ENCODE measurements at regions of chr19 and their contacts with region 1.

Region 1: GRCh38 chr19:18379803-18380747 is 5.9 kb upstream of the GDF15 start:
- DNase-seq: no peak
- ATAC-seq: no peak
- H3K4me3 ChIP-seq: no peak overlapping the region
- H3K4me3 Mint-ChIP-seq: no peak overlapping the region
- H3K27ac ChIP-seq: no peak overlapping the region
- H3K27ac Mint-ChIP-seq: no peak overlapping the region
- H3K4me1 ChIP-seq: peaks cover under 1% of the 10 kb centered on the region
- H3K4me1 Mint-ChIP-seq: peaks cover 4 to 5% of the 10 kb centered on the region in 2 donors
- H3K27me3 ChIP-seq: no peaks in the 10 kb centered on the region
- H3K27me3 Mint-ChIP-seq: no peaks in the 10 kb centered on the region
- CTCF ChIP-seq: no peak

Region 2: DNA sequence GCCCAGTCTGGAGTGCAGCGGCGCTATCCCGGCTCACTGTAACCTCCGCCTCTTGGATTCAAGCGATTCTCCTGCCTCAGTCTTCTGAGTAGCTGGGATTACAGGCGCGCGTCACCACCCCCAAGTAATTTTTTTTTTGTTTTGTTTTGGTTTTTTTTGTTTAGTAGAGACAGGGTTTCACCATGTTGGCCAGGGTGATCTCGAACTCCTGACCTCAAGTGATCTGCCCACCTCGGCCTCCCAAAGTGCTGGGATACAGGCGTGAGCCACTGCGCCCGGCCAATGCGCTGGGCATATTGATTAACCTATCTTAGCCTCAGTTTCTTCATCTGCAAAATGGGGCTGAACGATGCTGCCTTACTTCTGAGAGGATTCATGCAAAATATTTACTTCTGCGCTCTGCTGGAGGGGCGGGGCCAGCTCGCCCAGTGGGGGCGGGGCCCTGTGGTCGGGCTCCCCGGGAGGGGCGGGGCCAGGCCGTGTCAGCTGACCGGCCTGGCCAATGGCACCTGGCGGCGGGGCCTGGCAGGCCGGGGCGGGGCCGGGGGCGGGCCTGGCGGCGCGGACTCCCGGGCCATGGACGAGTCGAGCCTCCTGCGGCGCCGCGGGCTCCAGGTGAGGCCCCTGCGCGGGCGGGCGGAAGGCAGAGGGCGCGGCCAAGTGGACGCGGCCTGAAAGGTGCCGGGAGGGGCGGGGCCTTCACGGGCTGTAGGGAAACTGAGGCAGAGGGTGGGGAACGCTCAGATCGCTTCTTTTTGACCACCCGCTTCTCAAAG is 282.7 kb before region 1 on chr19 and contains the start of gene MAST3:
- intact Hi-C with region 1: no loop called
- DNase-seq: peak; percentile 92 to 95
- ATAC-seq: peak; percentile 97 to 100 (median 98)
- H3K4me3 ChIP-seq: peak within 1 kb of the TSS; percentile 37
- H3K4me3 Mint-ChIP-seq: peak within 1 kb of the TSS; percentile 85
- H3K27ac ChIP-seq: peak within 1 kb of the TSS; percentile 65
- H3K27ac Mint-ChIP-seq: peak within 1 kb of the TSS; percentile 16 to 87
- H3K4me1 ChIP-seq: peaks cover 31% of the 10 kb centered on the region
- H3K4me1 Mint-ChIP-seq: peaks cover 18 to 24% of the 10 kb centered on the region in 2 donors
- H3K27me3 ChIP-seq: no peaks in the 10 kb centered on the region
- H3K27me3 Mint-ChIP-seq: no peaks in the 10 kb centered on the region
- CTCF ChIP-seq: no peak
- total RNA-seq, gene MAST3: 84.5 to 101 (median 101) TPM

Region 3: GRCh38 chr19:18419195-18419698 is 39.2 kb after region 1 on chr19 and contains the start of gene SSBP4:
- intact Hi-C with region 1: loop called (anchors 5 kb)
- DNase-seq: peak; percentile 79 to 83
- ATAC-seq: peak; percentile 27 to 56 (median 54)
- H3K4me3 ChIP-seq: peak within 1 kb of the TSS; percentile 73
- H3K4me3 Mint-ChIP-seq: peak within 1 kb of the TSS; percentile 91
- H3K27ac ChIP-seq: peak within 1 kb of the TSS; percentile 89
- H3K27ac Mint-ChIP-seq: peak within 1 kb of the TSS; percentile 91 to 97
- H3K4me1 ChIP-seq: peaks cover 90% of the 10 kb centered on the region
- H3K4me1 Mint-ChIP-seq: peaks cover 73 to 89% of the 10 kb centered on the region in 2 donors
- H3K27me3 ChIP-seq: no peaks in the 10 kb centered on the region
- H3K27me3 Mint-ChIP-seq: no peaks in the 10 kb centered on the region
- CTCF ChIP-seq: peak; percentile 11
- total RNA-seq, gene SSBP4: 137 to 169 (median 158) TPM

Measured in natural killer cell (primary cell).